ENCODE measurements at regions of chr5 and their contacts with region 1.

Region 1: DNA sequence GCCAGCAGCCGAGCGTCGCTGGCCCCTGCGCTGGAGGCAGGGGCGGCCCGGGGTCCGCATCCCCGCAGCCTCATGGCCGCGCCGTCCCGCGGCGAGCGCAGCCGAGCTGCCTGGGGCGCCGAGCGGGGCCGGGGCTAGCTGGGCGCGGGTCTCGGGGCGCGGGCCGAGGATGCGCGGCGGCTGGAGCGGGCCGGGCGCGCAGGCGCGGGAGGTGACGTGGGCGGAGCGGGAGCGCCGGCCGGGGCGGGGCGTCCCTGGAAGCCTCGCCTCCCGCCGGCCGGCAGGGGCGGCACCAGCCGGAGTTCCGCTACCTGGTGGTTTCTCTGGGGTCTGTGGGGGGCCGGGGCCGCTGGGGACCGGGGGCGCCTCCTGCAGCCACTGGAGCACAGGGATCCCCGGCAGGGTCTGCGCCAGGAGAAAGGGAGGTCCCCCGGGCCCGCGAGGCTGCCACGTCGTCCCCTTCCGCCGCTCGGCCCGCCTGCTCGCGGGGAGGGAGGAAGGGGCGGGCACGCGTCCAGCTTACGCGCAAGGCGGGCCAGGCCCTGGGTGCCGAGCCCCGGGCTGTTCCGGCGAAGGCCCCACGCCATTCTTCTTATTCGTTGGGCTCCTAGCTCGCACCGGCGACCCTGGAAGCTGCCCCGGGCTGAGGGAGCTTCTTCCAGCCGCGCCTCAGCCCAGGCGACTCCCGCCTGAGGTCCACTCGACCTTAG is at the start of gene LPCAT1:
- DNase-seq: peak; percentile 68
- H3K4me3 Mint-ChIP-seq: peak within 1 kb of the TSS; percentile 87
- H3K27ac Mint-ChIP-seq: peak within 1 kb of the TSS; percentile 4
- H3K4me1 Mint-ChIP-seq: peaks cover 22% of the 10 kb centered on the region
- H3K27me3 Mint-ChIP-seq: no peaks in the 10 kb centered on the region
- total RNA-seq, gene LPCAT1: 31.2 to 34.1 TPM

Region 2: GRCh38 chr5:1536322-1536845 is 12.5 kb after region 1 on chr5:
- CTCF ChIA-PET with region 1: no interaction called
- intact Hi-C with region 1: loop called (anchors 1 kb)
- DNase-seq: peak; percentile 89
- H3K4me3 Mint-ChIP-seq: peak overlapping the region; percentile 76
- H3K27ac Mint-ChIP-seq: peak overlapping the region; percentile 68
- H3K4me1 Mint-ChIP-seq: peaks cover 16% of the 10 kb centered on the region
- H3K27me3 Mint-ChIP-seq: no peaks in the 10 kb centered on the region

Region 3: DNA sequence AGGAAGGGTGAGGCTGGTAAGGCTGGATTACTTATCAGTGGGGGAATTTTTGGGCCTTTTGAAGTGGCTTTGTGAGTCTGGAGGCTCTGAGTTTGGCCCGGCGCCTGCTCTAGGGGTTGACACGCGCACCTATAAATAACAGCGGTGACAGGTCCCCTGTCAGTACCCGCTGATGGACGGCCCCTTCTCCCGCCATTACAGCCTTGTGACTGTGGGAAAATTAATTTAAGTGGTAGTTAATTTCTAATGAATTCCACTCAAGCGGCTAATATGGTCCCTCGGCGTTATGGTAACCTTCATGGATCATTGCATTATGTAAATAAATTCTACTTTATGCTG is 259.3 kb after region 1 on chr5:
- CTCF ChIA-PET with region 1: no interaction called
- intact Hi-C with region 1: no loop called
- DNase-seq: no peak
- H3K4me3 Mint-ChIP-seq: no peak overlapping the region
- H3K27ac Mint-ChIP-seq: no peak overlapping the region
- H3K4me1 Mint-ChIP-seq: peaks cover 1% of the 10 kb centered on the region
- H3K27me3 Mint-ChIP-seq: peaks cover 3% of the 10 kb centered on the region

Measured in activated naive CD4-positive, alpha-beta T cell treated with anti-CD3 and anti-CD28 coated beads for 36 hours (primary cell).